Left cardiac atrium (tissue), 4 donors: ENCODE measurements at regions of chr1 and their contacts with region 1.

Region 1: GRCh38 chr1:184563308-184563707 is 176.5 kb downstream of the C1orf21 start:
- DNase-seq: no peak
- ATAC-seq: peak; percentile 43 to 64

Region 2: DNA sequence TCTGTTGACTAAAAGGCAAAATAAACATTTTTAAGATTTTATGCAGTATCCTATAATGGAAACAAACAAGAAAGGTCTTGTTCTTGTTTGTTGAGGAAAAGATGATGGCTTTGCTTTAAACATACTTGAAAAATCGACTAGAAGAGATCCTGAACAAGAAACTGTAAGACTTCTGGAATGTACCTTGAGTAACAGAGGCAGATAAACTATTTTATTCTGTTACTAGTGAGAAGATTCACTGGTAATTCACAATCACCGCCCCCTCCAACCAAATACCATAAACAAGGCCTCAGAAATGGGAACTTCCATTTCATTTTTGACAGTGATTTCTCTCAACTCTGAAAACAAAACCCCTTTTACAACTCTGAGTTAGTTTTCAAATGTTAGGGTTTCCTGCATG is 493.6 kb before region 1 on chr1:
- intact Hi-C with region 1: loop called in 1 of 2 experiments (anchors 2 kb)
- DNase-seq: no peak
- ATAC-seq: no peak

Region 3: GRCh38 chr1:184242507-184242943 is 320.8 kb before region 1 on chr1:
- intact Hi-C with region 1: loop called in 1 of 2 experiments (anchors 5 kb)
- DNase-seq: no peak
- ATAC-seq: peak; percentile 79 to 83

Region 4: GRCh38 chr1:184386312-184387068 is 176.8 kb before region 1 on chr1 and contains the start of gene C1orf21:
- intact Hi-C with region 1: loop called in 1 of 2 experiments (anchors 5 kb)
- DNase-seq: peak; percentile 91
- ATAC-seq: peak; percentile 97 to 98
- total RNA-seq, gene C1orf21: 61.3 to 80.7 TPM

Region 5: DNA sequence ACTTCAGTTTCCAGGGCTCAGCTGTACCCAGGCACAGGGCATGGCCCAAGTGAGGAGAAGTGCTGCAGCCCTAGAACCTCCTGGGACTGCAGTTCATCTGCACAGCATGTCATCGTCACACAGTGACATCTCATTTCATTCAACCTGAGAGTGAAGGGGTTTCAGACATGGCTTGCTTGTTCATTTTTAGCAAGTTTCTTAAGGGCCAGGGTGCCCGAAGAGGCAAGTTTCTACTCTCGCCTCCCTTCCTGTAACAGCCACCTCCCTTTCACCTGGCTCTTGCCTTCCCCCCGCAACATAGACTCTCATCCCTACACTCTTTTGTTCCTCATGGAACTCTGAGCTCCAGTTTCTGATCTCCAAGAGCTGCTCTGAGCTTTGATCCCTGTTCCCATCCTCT is 68.4 kb before region 1 on chr1:
- intact Hi-C with region 1: loop called in 1 of 2 experiments (anchors 5 kb)
- DNase-seq: no peak
- ATAC-seq: no peak

Region 6: GRCh38 chr1:184743062-184743756 is 179.9 kb after region 1 on chr1:
- intact Hi-C with region 1: no loop called
- DNase-seq: no peak
- ATAC-seq: no peak

Region 7: GRCh38 chr1:184771190-184771691 is 207.9 kb after region 1 on chr1:
- intact Hi-C with region 1: no loop called
- DNase-seq: no peak
- ATAC-seq: no peak